ENCODE measurements at regions of chr2 and their contacts with region 1.

Region 1: GRCh38 chr2:118186110-118186857 is 98.0 kb downstream of the INSIG2 start:
- DNase-seq: peak; percentile 77 to 91 (median 86)
- ATAC-seq: peak; percentile 97
- H3K4me3 ChIP-seq: peak overlapping the region; percentile 81
- H3K4me3 Mint-ChIP-seq: peak overlapping the region; percentile 89 to 98 (median 94)
- H3K27ac ChIP-seq: peak overlapping the region; percentile 74
- H3K27ac Mint-ChIP-seq: peak overlapping the region; percentile 88 to 98 (median 90)
- H3K4me1 ChIP-seq: peaks cover 6 to 9% of the 10 kb centered on the region in 2 donors
- H3K4me1 Mint-ChIP-seq: peaks cover 7 to 25% (median 21%) of the 10 kb centered on the region in 7 donors
- H3K27me3 ChIP-seq: no peaks in the 10 kb centered on the region
- H3K27me3 Mint-ChIP-seq: peaks cover 0 to 2% (median 0%) of the 10 kb centered on the region in 5 donors

Region 2: DNA sequence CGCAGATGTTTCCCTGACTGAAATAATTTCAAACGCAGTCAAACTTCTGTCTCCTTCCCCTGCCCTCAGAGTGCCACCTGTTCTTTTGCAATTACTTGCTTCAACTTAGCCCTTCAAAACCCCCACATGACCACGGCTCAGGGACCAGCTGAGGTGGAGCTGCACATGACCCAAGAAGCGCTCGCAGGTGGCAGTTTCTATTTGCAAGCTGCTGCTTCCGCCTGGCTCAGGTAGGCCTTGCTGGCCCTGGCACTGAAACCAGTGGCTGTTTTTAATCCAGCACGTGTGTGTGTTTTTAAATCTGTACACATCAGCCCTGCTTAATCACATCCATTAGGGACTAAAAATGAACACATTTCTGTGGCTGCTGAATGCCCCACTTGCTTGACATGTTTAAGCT is 267.7 kb before region 1 on chr2:
- CTCF ChIA-PET with region 1: no interaction called
- POLR2A ChIA-PET with region 1: no interaction called
- intact Hi-C with region 1: no loop called
- DNase-seq: no peak
- ATAC-seq: no peak
- H3K4me3 ChIP-seq: no peak overlapping the region
- H3K4me3 Mint-ChIP-seq: no peak overlapping the region
- H3K27ac ChIP-seq: no peak overlapping the region
- H3K27ac Mint-ChIP-seq: no peak overlapping the region
- H3K4me1 ChIP-seq: no peaks in the 10 kb centered on the region
- H3K4me1 Mint-ChIP-seq: no peaks in the 10 kb centered on the region
- H3K27me3 ChIP-seq: no peaks in the 10 kb centered on the region
- H3K27me3 Mint-ChIP-seq: no peaks in the 10 kb centered on the region

Region 3: DNA sequence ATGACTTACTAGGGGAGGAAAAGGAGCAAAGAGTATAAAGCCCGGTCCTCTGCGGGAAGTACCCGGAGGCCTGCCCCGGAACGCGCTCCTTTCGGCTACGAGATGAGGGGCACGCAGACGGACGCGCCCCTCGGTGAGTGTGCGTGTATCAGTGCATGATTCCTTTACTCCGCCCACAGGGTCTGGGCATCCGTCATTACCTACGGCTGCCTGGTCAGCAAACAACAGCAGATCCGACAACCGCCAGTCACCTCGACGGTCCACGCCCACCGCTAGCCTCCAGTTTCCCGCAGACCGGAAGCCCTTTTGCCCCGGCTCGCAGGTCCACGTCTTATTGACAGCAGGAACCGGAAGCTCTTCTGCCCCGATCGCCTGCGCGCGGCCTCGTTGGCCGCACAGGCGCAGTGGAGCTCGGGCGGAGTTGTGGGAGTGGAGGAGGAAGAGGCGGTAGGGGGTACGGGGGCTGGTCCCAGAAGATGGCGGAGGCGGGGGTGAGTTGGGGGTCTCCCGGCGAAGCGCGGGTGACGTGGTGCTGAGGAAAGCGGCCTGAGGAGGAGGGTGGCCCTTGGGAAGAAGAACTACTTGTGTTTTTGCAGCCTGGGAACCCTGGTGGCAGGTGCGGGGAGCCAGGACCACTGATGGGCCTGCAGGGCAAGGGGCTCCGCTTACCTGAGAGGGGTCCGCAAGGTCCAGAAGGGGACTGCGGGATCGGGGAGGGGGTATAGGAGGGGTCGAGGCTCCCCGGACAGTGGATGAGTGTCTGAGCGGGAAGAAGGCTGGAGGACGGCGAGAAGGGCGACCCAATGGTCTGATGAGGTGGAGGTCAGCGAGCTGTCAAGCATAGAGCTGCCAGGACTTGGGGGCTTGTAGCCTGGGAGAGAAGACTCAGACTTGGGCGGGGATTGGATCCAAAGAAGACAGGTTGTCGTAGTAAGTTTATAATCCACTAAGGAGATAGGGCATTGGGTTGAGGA is 97.9 kb before region 1 on chr2 and contains the start of gene INSIG2:
- CTCF ChIA-PET with region 1: interaction called, 3 read pairs
- POLR2A ChIA-PET with region 1: interaction called, 9 read pairs
- intact Hi-C with region 1: loop called (anchors 1 kb)
- DNase-seq: peak; percentile 77 to 92 (median 81)
- ATAC-seq: peak; percentile 93
- H3K4me3 ChIP-seq: peak within 1 kb of the TSS; percentile 92
- H3K4me3 Mint-ChIP-seq: peak within 1 kb of the TSS; percentile 63 to 96 (median 92)
- H3K27ac ChIP-seq: peak within 1 kb of the TSS; percentile 87
- H3K27ac Mint-ChIP-seq: peak within 1 kb of the TSS; percentile 70 to 97 (median 91)
- H3K4me1 ChIP-seq: peaks cover 0 to 7% of the 10 kb centered on the region in 2 donors
- H3K4me1 Mint-ChIP-seq: peaks cover 6 to 37% (median 24%) of the 10 kb centered on the region in 7 donors
- H3K27me3 ChIP-seq: no peaks in the 10 kb centered on the region
- H3K27me3 Mint-ChIP-seq: peaks cover 0 to 12% (median 0%) of the 10 kb centered on the region in 5 donors
- total RNA-seq, gene INSIG2: 8.5 to 31.5 (median 20.3) TPM

Region 4: GRCh38 chr2:118122594-118123281 is 63.5 kb before region 1 on chr2:
- CTCF ChIA-PET with region 1: no interaction called
- POLR2A ChIA-PET with region 1: no interaction called
- intact Hi-C with region 1: no loop called
- DNase-seq: no peak
- ATAC-seq: no peak
- H3K4me3 ChIP-seq: no peak overlapping the region
- H3K4me3 Mint-ChIP-seq: no peak overlapping the region
- H3K27ac ChIP-seq: no peak overlapping the region
- H3K27ac Mint-ChIP-seq: no peak overlapping the region
- H3K4me1 ChIP-seq: no peaks in the 10 kb centered on the region
- H3K4me1 Mint-ChIP-seq: peaks cover 0 to 5% (median 0%) of the 10 kb centered on the region in 7 donors
- H3K27me3 ChIP-seq: no peaks in the 10 kb centered on the region
- H3K27me3 Mint-ChIP-seq: peaks cover 11 to 31% (median 21%) of the 10 kb centered on the region in 5 donors